Right ventricle myocardium inferior (tissue), 1 donor: ENCODE measurements at regions of chr17 and their contacts with region 1.

Region 1: GRCh38 chr17:5065227-5065744 is 13.0 kb upstream of the ZFP3 start:
- DNase-seq: no peak
- ATAC-seq: no peak

Region 2: DNA sequence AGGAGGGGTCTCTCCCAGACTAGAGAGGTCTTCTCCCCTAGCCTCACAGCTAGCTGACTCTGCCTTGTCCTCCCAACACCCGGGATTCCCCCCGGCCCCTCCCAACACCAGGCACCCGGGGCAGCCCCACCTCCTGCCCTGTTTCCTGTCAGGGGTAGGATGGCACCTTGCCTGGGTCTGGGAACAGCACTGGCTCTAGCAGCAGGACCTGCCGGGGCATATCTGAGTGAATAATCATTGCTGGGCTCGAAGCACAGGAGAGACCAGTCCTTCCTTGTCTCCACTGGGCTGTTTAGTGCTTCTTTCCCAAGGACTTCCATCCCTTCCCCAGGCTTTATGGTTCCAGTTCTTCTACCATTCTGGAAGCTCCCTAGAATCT is 206.4 kb before region 1 on chr17:
- intact Hi-C with region 1: no loop called
- DNase-seq: peak; percentile 79
- ATAC-seq: peak; percentile 82

Region 3: GRCh38 chr17:4908301-4908700 is 157.0 kb before region 1 on chr17:
- intact Hi-C with region 1: loop called (anchors 1 kb)
- DNase-seq: no peak
- ATAC-seq: peak; percentile 24

Region 4: DNA sequence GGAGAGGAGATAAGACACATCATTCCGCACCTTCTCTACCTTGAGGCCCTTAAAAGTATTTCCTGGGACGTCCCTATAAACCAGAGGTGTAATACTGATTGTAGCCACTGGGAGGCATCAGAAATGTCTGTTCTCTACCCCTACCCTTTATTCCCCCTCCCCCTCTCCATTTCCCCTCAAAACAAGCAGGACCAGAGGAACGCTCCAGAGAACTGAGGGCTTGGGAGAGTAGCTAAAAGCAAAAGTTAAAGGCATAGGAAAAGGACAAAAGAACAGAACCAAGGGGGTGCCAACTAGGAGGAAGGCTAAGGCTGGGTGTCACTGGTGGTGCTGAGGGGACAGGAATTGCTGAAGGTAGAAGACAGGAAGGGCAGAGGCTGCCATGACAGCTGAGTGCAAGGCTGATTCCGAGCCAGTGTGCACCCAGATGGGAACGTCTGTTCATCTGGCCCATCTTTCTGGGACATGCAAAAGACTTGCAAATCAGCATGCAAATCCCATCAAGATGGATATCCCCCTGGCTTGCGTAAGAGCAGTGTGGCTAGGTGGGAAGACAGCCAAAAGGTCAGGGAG is 84.6 kb before region 1 on chr17:
- intact Hi-C with region 1: loop called (anchors 2 kb)
- DNase-seq: no peak
- ATAC-seq: no peak

Region 5: GRCh38 chr17:5031365-5032082 is 33.8 kb before region 1 on chr17:
- intact Hi-C with region 1: loop called (anchors 1 kb)
- DNase-seq: peak; percentile 89
- ATAC-seq: peak; percentile 73